ENCODE measurements at regions of chr20 and their contacts with region 1.

Region 1: DNA sequence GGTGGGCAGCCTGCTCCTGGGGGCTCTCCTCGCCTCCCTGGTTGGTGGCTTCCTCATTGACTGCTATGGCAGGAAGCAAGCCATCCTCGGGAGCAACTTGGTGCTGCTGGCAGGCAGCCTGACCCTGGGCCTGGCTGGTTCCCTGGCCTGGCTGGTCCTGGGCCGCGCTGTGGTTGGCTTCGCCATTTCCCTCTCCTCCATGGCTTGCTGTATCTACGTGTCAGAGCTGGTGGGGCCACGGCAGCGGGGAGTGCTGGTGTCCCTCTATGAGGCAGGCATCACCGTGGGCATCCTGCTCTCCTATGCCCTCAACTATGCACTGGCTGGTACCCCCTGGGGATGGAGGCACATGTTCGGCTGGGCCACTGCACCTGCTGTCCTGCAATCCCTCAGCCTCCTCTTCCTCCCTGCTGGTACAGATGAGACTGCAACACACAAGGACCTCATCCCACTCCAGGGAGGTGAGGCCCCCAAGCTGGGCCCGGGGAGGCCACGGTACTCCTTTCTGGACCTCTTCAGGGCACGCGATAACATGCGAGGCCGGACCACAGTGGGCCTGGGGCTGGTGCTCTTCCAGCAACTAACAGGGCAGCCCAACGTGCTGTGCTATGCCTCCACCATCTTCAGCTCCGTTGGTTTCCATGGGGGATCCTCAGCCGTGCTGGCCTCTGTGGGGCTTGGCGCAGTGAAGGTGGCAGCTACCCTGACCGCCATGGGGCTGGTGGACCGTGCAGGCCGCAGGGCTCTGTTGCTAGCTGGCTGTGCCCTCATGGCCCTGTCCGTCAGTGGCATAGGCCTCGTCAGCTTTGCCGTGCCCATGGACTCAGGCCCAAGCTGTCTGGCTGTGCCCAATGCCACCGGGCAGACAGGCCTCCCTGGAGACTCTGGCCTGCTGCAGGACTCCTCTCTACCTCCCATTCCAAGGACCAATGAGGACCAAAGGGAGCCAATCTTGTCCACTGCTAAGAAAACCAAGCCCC is 16.0 kb downstream of the SLC2A10 start:
- DNase-seq: no peak
- ATAC-seq: no peak

Region 2: DNA sequence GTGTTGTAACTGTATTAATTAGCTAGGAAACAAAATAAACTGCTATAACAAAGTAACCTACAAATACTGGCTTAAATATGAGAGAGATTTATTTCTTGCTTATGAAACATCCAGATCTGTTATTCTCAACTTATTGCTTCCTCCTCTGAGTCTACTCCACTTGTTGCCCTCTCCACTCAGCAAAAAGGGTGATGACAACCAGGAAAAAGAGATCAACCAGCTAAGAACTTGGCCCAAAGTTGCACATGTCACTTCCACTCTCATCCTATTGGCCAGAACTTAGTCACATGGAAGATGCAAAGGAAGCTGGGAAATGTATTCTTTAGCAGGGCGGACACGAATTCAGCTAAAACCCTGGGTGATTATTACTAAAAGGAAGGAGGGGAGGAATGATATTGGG is 31.0 kb before region 1 on chr20:
- intact Hi-C with region 1: loop called (anchors 2 kb)
- DNase-seq: no peak
- ATAC-seq: peak; percentile 21

Region 3: GRCh38 chr20:47576516-47577033 is 851.1 kb after region 1 on chr20:
- intact Hi-C with region 1: no loop called
- DNase-seq: peak; percentile 66
- ATAC-seq: peak; percentile 95

Measured in sciatic nerve (tissue), 2 donors.